Activated naive CD4-positive, alpha-beta T cell treated with anti-CD3 and anti-CD28 coated beads for 36 hours (primary cell): ENCODE measurements at regions of chr18 and their contacts with region 1.

Region 1: DNA sequence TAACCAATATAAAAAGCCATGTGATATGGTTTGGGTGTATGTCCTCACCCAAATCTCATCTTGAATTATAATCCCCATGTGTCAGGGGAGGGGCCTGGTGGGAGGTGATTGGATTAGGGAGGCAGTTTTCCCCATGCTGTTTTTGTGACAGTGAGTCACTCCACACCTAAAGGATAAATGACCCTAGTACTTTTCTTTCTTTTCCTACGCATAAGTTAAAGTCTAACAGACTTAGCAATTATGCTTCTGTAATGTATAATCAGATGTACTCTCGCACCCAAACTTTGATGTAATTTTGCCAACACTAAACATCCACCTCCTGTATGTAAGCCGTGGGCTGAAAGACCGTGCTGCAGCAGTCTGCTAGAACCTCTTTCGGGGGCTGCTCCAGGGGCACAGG is 97.2 kb upstream of the DSEL start:
- DNase-seq: no peak
- H3K4me3 Mint-ChIP-seq: no peak overlapping the region
- H3K27ac Mint-ChIP-seq: no peak overlapping the region
- H3K4me1 Mint-ChIP-seq: no peaks in the 10 kb centered on the region
- H3K27me3 Mint-ChIP-seq: no peaks in the 10 kb centered on the region

Region 2: DNA sequence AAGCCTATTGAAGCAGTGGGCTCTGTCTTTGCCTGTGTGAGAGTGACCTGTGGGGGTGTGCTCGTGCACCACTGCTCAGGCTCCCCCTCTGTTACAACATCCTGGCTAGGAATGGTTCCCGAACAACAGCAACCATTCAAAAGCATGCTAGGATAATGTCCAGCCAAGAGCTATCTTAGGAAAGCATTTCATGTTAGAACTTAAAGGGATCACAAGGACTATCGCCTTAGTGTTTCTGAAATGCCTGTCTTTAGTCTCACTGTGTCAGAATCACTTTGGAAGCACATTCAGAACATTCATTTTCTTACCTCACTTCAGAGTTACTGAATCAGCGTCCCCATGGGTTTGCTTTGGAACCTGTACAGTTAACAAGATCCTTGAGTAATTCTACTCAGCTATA is 37.7 kb after region 1 on chr18:
- CTCF ChIA-PET with region 1: no interaction called
- intact Hi-C with region 1: loop called (anchors 1 kb)
- DNase-seq: no peak
- H3K4me3 Mint-ChIP-seq: no peak overlapping the region
- H3K27ac Mint-ChIP-seq: no peak overlapping the region
- H3K4me1 Mint-ChIP-seq: no peaks in the 10 kb centered on the region
- H3K27me3 Mint-ChIP-seq: peaks cover 4% of the 10 kb centered on the region

Region 3: GRCh38 chr18:68623342-68623741 is 1009.6 kb after region 1 on chr18:
- CTCF ChIA-PET with region 1: no interaction called
- intact Hi-C with region 1: loop called (anchors 5 kb)
- DNase-seq: peak; percentile 51
- H3K4me3 Mint-ChIP-seq: no peak overlapping the region
- H3K27ac Mint-ChIP-seq: no peak overlapping the region
- H3K4me1 Mint-ChIP-seq: no peaks in the 10 kb centered on the region
- H3K27me3 Mint-ChIP-seq: peaks cover 5% of the 10 kb centered on the region